Psoas muscle (tissue), 8 donors: ENCODE measurements at regions of chr13 and their contacts with region 1.

Region 1: DNA sequence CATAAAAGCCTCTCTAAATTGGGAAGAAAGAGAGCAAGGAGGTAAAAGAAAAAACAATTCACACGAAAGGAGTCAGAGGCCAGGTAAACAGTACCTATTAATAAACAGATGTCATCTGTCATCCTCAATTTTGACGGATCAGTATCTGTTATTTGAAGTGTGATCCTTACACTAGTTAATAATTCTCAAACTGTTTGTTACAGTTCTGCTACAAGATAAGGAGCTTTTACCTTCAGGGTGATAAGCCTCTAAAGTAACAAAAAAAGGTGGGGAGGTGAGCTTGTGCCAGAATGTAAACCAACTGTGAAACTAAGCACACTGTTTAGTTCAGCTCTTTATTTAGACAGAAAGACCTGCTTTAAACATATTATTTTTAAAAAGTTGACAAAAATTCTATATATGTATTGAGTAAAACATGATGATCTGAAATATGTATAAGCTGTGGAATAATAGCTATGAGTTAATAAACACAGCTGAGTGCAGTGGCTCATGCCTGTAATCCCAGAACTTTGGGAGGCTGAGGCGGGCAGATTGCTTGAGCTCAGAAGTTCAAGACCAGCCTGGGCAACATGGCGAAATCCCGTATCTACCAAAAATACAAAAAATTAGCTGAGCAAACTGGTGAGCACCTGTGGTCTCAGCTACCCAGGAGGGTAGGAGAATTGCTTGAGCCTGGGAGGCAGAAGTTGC is 48.4 kb upstream of the EBPL start:
- DNase-seq: no peak
- ATAC-seq: no peak
- H3K4me3 ChIP-seq: no peak overlapping the region
- H3K27ac ChIP-seq: no peak overlapping the region
- H3K4me1 ChIP-seq: no peaks in the 10 kb centered on the region
- H3K27me3 ChIP-seq: no peaks in the 10 kb centered on the region
- CTCF ChIP-seq: no peak

Region 2: DNA sequence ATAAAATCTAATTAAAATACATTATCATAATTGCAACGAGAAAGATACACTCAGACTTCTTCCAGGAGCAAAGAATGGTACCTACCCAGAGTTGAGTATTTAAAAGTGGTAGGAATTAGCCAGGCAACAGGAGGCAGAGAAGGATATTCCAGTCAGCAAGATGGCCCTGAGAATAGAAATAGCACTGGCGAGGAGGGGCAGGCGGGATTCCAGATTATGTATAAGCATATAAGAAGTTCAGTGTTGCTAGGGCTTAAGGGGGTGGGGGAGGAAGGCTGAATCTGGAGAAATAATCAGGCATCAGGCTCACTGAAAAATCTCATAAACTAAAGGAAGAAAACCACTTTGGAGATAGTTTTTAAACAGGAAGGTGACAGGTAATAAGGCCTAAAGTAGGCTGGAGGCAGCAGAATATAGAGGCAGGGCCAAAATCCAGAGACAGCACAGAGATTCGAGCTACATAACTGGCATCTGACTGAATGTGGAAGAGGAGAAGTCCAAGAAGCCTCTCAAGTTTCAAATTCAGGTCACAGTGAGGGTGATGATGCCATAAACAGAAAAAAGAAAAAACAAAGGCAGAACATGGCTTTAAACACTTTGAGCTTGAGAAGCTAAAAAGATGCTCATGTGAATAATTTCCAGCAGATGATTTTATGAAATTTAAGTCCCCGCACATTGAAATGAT is 45.4 kb after region 1 on chr13:
- intact Hi-C with region 1: loop called in 1 of 2 experiments (anchors 5 kb)
- DNase-seq: no peak
- ATAC-seq: peak; percentile 74 to 89 (median 86)
- H3K4me3 ChIP-seq: peak overlapping the region; percentile 17
- H3K27ac ChIP-seq: peak overlapping the region; percentile 76
- H3K4me1 ChIP-seq: peaks cover 91% of the 10 kb centered on the region
- H3K27me3 ChIP-seq: no peaks in the 10 kb centered on the region
- CTCF ChIP-seq: no peak

Region 3: DNA sequence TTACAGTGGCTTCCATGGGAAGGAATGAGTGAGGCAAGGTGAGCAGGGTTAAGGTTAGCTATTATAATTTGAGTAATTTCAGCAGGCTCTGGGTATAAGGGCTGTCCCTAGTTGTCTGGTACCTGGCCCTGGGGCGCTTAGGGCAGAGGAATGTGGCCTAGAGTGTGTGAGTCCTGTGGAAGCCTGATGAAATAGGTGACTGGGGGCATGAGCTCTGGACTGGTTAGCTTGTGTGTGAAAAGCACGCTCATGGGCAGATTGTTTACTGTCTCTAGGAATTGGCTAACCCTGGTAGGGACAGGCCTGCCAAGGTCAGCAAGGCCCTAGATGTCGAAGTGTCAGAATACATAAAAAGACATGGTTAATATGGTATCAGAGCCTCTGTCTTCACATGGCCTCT is 153.9 kb after region 1 on chr13:
- intact Hi-C with region 1: no loop called
- DNase-seq: no peak
- ATAC-seq: no peak
- H3K4me3 ChIP-seq: no peak overlapping the region
- H3K27ac ChIP-seq: no peak overlapping the region
- H3K4me1 ChIP-seq: no peaks in the 10 kb centered on the region
- H3K27me3 ChIP-seq: no peaks in the 10 kb centered on the region
- CTCF ChIP-seq: no peak